ENCODE measurements at regions of chr20 and their contacts with region 1.

Region 1: DNA sequence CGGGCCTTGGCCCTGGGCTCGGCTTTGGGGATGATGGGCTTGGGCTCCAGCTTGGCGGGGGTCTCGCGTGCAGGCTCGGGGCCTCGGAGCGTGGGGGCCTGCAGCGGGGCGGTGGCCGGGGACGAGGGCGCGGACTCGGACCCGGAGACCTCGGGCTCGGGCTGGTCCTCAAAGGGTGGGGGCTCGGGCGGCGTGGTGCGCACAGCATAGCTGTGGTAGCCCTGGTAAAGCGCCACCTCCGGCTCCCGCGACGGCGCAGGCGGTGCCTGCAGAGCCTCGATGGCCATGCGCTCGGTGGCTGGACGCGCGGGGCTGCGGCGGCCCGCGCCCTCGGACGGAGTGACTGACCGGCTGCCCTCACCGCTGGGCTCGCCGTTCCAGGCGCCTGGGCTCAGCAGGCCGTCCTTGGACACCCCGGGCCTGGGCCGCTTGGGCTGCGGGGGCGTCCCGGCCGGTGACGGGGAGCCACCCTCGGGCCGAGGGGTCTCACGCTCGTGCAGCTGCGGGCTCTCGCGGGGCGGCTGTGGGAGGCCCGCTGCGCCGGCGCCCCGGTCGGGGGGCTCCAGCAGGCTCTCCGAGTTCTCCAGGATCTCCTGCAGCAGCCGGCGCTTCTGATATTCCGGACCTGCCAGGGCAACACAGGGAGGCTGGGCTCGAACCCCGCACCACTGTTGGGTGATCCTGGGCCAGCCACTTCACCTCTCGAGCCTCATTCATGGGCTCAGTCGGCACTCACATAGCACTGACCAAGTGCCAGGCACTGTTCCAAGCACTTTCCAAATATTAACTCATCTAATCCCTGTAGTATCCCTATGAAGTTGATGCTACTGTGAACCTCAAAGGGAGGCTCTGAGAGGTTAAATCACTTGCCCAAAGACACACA is 71.0 kb downstream of the JPH2 start:
- DNase-seq: no peak
- H3K4me3 ChIP-seq: no peak overlapping the region
- H3K27me3 ChIP-seq: no peaks in the 10 kb centered on the region
- CTCF ChIP-seq: no peak

Region 2: DNA sequence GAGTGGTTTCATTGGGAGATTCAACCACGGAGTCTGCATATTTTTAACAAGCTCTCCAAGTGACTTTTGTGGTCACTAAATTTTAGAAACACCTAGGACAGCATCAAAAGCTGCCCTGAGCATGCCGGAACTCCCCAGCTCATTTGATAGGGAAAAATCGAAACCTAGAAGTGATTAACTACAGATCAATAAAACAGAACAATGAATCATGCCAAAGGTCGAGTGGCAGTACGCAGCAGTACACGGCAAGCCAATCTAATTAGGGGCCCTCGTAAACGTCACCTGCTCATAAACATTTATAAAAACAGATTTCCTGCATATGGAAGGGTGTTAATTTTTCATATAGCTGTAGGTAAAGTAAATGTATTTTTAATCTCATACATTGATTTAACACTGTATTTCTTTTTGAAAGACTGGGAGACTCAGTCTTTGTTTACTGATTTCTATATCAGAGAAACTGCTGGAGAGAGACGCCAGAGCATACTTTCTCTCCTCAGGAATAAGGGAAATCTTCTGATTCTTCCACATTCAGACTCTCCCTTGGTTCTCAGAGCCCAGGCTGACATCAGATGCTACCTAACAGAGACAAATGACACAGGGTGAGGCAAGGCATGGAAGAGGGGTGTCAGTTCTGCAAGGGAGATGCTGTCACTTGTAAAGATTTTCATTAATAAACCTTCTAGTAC is 1158.8 kb before region 1 on chr20:
- CTCF ChIA-PET with region 1: no interaction called
- POLR2A ChIA-PET with region 1: no interaction called
- DNase-seq: no peak
- H3K4me3 ChIP-seq: no peak overlapping the region
- H3K27me3 ChIP-seq: no peaks in the 10 kb centered on the region
- CTCF ChIP-seq: no peak

Region 3: DNA sequence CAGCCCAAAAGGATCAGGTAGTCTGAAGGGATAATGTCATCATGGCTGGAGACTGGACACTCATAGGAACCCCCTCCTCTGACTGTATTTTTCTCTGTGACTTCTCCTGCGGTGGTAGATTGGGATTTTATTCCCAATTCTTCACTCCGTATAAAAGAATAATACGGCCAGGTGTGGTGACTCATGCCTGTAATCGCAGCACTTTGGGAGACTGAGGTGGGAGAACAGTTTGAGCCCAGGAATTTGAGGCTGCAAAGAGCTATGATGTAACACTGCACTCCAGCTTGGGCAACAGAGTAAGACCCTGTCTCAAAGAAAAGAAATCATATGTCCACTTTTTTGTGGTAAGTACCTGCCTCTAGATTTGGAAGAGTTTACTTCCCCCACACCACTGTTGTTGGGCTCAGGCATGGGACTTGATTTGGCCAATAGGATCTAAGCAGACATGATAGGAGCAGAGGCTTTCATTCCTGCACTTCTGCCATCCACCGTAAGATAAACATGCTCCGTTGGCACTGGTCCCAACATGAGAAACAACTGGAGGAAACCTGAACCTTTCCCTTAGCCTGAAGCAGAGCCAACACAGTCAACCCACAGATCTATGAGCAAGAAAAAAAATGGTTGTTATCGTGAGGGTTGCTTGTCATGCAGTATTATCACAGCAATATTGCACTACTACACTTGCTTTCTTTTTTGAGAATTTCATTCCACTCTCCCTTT is 11.0 kb before region 1 on chr20:
- CTCF ChIA-PET with region 1: interaction called, 28 read pairs
- POLR2A ChIA-PET with region 1: no interaction called
- DNase-seq: no peak
- H3K4me3 ChIP-seq: no peak overlapping the region
- H3K27me3 ChIP-seq: peaks cover 7% of the 10 kb centered on the region
- CTCF ChIP-seq: no peak

Region 4: DNA sequence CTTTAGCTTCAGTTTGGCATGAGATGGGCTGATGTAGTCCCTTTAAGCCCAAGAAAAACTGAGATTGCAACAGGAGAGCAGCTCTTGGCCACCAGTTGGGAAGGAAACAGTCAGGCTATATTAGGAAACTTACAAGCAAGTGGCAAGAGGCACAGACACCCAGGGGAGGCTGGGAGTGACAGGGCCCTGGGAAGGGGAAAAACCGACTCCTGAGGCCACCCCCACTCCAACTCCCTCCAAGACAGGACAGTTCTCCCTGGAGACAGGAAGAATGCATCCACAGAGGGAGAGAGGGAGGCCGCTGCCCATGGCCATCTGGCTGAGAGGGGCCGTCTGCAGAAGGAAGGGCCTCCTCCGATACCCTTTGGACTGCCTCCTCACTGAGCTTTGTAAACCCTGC is 50.5 kb after region 1 on chr20:
- CTCF ChIA-PET with region 1: interaction called, 20 read pairs
- POLR2A ChIA-PET with region 1: no interaction called
- DNase-seq: peak; percentile 30
- H3K4me3 ChIP-seq: no peak overlapping the region
- H3K27me3 ChIP-seq: no peaks in the 10 kb centered on the region
- CTCF ChIP-seq: no peak

Region 5: DNA sequence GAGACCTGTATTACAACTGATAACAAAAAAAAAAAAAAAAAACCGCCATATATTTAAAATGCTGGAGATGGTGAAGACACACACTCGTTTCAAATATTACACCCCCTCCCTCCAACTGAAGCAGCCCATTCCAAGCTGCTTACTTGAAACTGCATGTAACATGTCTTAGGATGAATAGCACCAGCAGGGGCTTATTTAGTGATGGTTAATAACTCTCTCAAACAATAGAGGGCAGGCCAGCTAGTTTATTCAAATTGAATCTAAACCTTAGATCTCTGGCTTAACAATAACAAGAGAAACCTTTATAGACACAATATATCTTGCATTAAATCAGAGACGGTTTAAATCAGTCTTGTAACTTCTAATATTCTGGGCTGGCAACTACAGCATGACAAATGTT is 80.3 kb after region 1 on chr20:
- CTCF ChIA-PET with region 1: interaction called, 307 read pairs
- POLR2A ChIA-PET with region 1: no interaction called
- DNase-seq: no peak
- H3K4me3 ChIP-seq: no peak overlapping the region
- H3K27me3 ChIP-seq: no peaks in the 10 kb centered on the region
- CTCF ChIP-seq: no peak

Region 6: DNA sequence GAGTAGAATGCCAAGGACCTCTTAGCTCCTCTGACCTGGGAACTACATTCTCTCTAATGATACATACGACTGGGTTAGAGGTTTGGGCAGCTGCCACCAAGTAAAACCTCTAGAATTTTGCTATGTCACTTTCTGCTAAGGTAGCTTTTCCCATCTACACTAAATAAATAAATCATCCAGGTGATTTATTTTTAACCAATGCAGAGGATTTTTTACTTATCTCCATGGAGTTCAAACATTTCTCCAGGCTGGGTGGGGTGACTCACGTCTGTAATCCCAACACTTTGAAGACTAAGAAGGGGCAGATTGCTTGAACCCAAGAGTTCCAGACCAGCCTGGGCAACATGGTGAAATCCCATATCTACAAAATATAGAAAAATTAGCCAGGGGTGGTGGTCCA is 266.6 kb after region 1 on chr20:
- CTCF ChIA-PET with region 1: no interaction called
- POLR2A ChIA-PET with region 1: no interaction called
- DNase-seq: no peak
- H3K4me3 ChIP-seq: no peak overlapping the region
- H3K27me3 ChIP-seq: peaks cover 2% of the 10 kb centered on the region
- CTCF ChIP-seq: no peak